ENCODE measurements at regions of chr4 and their contacts with region 1.

Region 1: GRCh38 chr4:103046416-103047290 is 27.1 kb upstream of the SLC9B1 start:
- DNase-seq: peak; percentile 58
- H3K4me3 Mint-ChIP-seq: no peak overlapping the region
- H3K27ac Mint-ChIP-seq: no peak overlapping the region
- H3K4me1 Mint-ChIP-seq: no peaks in the 10 kb centered on the region
- H3K27me3 Mint-ChIP-seq: no peaks in the 10 kb centered on the region
- CTCF ChIP-seq: peak; percentile 37

Region 2: GRCh38 chr4:103075901-103076739 is 29.5 kb after region 1 on chr4:
- CTCF ChIA-PET with region 1: interaction called, 4 read pairs
- POLR2A ChIA-PET with region 1: no interaction called
- intact Hi-C with region 1: loop called (anchors 1 kb)
- DNase-seq: peak; percentile 74
- H3K4me3 Mint-ChIP-seq: peak overlapping the region; percentile 93
- H3K27ac Mint-ChIP-seq: peak overlapping the region; percentile 92
- H3K4me1 Mint-ChIP-seq: peaks cover 20% of the 10 kb centered on the region
- H3K27me3 Mint-ChIP-seq: no peaks in the 10 kb centered on the region
- CTCF ChIP-seq: no peak